Activated CD4-positive, alpha-beta T cell treated with anti-CD3 and anti-CD28 coated beads, Interleukin-2, amount 10 ng/mL, durations not matched to agents 24 days and 14 days (primary cell): ENCODE measurements at regions of chr5 and their contacts with region 1.

Region 1: DNA sequence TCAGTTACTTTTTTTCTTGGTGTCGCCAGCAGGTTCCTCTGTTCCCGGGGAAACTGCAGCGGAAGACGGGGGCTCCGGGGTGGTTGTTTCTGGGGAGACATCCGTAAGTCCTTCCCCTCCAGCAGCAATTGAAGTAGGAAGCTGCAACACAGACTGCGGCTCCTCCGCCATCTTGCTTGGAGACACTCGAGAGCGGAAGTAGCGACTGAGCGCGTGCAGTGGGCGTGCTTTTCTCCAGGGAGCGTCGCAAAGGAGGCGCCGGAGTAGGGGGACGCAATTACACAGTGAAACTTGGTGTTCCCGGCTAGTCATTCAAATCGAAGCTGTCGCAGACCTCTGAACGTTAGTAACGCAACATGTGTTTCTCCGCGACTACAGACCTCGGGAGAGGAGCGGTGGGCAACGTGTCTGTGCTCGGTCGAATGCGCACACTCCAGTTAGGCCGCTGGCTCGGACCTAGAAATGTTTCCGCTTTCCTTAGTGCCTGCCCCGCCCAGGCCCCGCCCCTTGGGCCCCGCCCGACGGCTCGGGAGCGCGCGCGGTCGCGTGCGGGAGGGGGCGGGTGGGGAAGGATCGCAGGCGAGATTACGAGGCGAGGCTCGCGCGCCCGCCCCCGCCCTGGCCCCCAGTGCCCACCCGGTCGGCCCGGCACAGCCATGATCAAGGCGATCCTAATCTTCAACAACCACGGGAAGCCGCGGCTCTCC is at the starts of genes AP3S1 and ATG12:
- DNase-seq: peak; percentile 98
- H3K4me3 Mint-ChIP-seq: peak within 1 kb of the TSS; percentile 98
- H3K27ac Mint-ChIP-seq: peak within 1 kb of the TSS; percentile 100
- H3K4me1 Mint-ChIP-seq: peaks cover 53% of the 10 kb centered on the region
- H3K27me3 Mint-ChIP-seq: peaks cover 9% of the 10 kb centered on the region
- total RNA-seq, gene AP3S1: 64.6 and 72.8 TPM in 2 replicates
- total RNA-seq, gene ATG12: 31.7 and 37.0 TPM in 2 replicates

Region 2: GRCh38 chr5:115209279-115209678 is 632.3 kb before region 1 on chr5:
- intact Hi-C with region 1: loop called (anchors 5 kb)
- DNase-seq: peak; percentile 90
- H3K4me3 Mint-ChIP-seq: peak overlapping the region; percentile 24
- H3K27ac Mint-ChIP-seq: peak overlapping the region; percentile 68
- H3K4me1 Mint-ChIP-seq: peaks cover 19% of the 10 kb centered on the region
- H3K27me3 Mint-ChIP-seq: no peaks in the 10 kb centered on the region

Region 3: GRCh38 chr5:115309751-115310370 is 531.7 kb before region 1 on chr5:
- intact Hi-C with region 1: loop called (anchors 2 kb)
- DNase-seq: no peak
- H3K4me3 Mint-ChIP-seq: no peak overlapping the region
- H3K27ac Mint-ChIP-seq: no peak overlapping the region
- H3K4me1 Mint-ChIP-seq: no peaks in the 10 kb centered on the region
- H3K27me3 Mint-ChIP-seq: peaks cover 45% of the 10 kb centered on the region

Region 4: GRCh38 chr5:115601701-115602590 is 239.6 kb before region 1 on chr5 and contains the start of gene TICAM2:
- intact Hi-C with region 1: loop called (anchors 1 kb)
- DNase-seq: peak; percentile 90
- H3K4me3 Mint-ChIP-seq: peak within 1 kb of the TSS; percentile 47
- H3K27ac Mint-ChIP-seq: peak within 1 kb of the TSS; percentile 62
- H3K4me1 Mint-ChIP-seq: peaks cover 25% of the 10 kb centered on the region
- H3K27me3 Mint-ChIP-seq: no peaks in the 10 kb centered on the region
- total RNA-seq, gene TICAM2: 0.86 and 1.0 TPM in 2 replicates

Region 5: GRCh38 chr5:115634343-115635132 is 207.0 kb before region 1 on chr5:
- intact Hi-C with region 1: no loop called
- DNase-seq: peak; percentile 94
- H3K4me3 Mint-ChIP-seq: peak overlapping the region; percentile 52
- H3K27ac Mint-ChIP-seq: no peak overlapping the region
- H3K4me1 Mint-ChIP-seq: peaks cover 29% of the 10 kb centered on the region
- H3K27me3 Mint-ChIP-seq: peaks cover 64% of the 10 kb centered on the region

Region 6: GRCh38 chr5:115816226-115817081 is 25.1 kb before region 1 on chr5 and contains the start of gene CDO1:
- intact Hi-C with region 1: loop called (anchors 2 kb)
- DNase-seq: peak; percentile 77
- H3K4me3 Mint-ChIP-seq: peak within 1 kb of the TSS; percentile 78
- H3K27ac Mint-ChIP-seq: no peak within 1 kb of the TSS
- H3K4me1 Mint-ChIP-seq: peaks cover 22% of the 10 kb centered on the region
- H3K27me3 Mint-ChIP-seq: peaks cover 75% of the 10 kb centered on the region
- total RNA-seq, gene CDO1: 0.45 and 0.82 TPM in 2 replicates

Region 7: GRCh38 chr5:115857636-115858309 is 16.2 kb after region 1 on chr5:
- intact Hi-C with region 1: no loop called
- DNase-seq: no peak
- H3K4me3 Mint-ChIP-seq: no peak overlapping the region
- H3K27ac Mint-ChIP-seq: no peak overlapping the region
- H3K4me1 Mint-ChIP-seq: peaks cover 8% of the 10 kb centered on the region
- H3K27me3 Mint-ChIP-seq: no peaks in the 10 kb centered on the region

Region 8: GRCh38 chr5:115920171-115920725 is 78.7 kb after region 1 on chr5:
- intact Hi-C with region 1: no loop called
- DNase-seq: no peak
- H3K4me3 Mint-ChIP-seq: no peak overlapping the region
- H3K27ac Mint-ChIP-seq: no peak overlapping the region
- H3K4me1 Mint-ChIP-seq: no peaks in the 10 kb centered on the region
- H3K27me3 Mint-ChIP-seq: no peaks in the 10 kb centered on the region

Region 9: GRCh38 chr5:116084871-116085715 is 243.6 kb after region 1 on chr5 and contains the start of gene COMMD10:
- intact Hi-C with region 1: loop called (anchors 2 kb)
- DNase-seq: peak; percentile 94
- H3K4me3 Mint-ChIP-seq: peak within 1 kb of the TSS; percentile 88
- H3K27ac Mint-ChIP-seq: peak within 1 kb of the TSS; percentile 91
- H3K4me1 Mint-ChIP-seq: peaks cover 26% of the 10 kb centered on the region
- H3K27me3 Mint-ChIP-seq: peaks cover 2% of the 10 kb centered on the region
- total RNA-seq, gene COMMD10: 22.2 and 24.4 TPM in 2 replicates